ENCODE measurements at regions of chr17 and their contacts with region 1.

Region 1: DNA sequence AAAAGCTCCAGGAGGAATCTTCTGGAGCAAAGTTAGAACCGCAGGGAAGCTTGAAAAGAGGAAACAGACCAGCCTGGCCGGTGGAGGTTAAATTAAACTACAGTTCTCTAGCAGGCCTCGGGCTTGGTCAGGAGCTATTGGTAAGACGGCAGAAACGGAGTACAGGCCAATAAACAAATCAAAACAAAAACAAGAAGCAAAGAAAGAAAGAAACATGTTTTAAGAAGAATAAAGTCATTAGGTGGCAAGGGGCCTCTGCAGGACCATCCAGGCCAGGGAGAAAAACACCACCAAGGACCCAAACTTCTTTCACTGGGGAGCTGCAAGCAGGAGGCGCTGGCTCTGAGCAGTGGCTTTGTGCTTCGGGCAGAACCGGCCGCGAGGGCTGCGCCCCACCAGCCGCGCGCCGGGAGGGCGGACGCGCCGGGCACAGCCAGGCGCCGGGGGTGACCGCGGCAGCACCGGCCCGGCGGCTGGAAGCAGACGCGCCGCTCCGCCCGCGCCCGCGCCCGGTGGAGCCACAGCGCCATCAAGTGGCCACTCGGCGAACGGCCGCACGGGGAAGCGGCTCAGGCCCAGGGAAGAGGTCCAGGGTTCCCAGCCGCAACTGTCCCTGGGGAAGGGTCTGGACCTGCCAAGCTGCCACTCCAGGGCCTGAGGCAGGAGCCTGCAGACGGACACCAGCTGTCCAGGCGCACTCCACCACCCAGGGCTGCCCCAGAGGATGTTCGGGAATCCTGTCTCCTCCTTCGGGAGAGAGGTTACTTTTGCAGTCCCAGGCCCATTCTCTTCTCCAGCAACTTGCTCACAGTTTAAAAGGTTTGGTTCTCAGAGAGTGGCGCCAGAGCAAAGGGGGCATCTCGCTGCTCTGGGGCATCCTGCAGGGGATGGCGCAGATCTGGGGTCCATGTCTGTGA is 419.4 kb downstream of the SOX9 start:
- DNase-seq: peak; percentile 99
- H3K4me3 ChIP-seq: no peak overlapping the region
- H3K27ac ChIP-seq: peak overlapping the region; percentile 31 to 54
- H3K4me1 ChIP-seq: peaks cover 9 to 14% of the 10 kb centered on the region in 2 experiments
- H3K27me3 ChIP-seq: no peaks in the 10 kb centered on the region
- CTCF ChIP-seq: peak; percentile 82
- EP300 ChIP-seq: peak; percentile 14 to 16; a peak in 1 of 4 replicates
- RAD21 ChIP-seq: peak; percentile 93

Region 2: GRCh38 chr17:70775679-70776078 is 1764.6 kb before region 1 on chr17:
- CTCF ChIA-PET with region 1: interaction called, 12 read pairs
- POLR2A ChIA-PET with region 1: no interaction called
- DNase-seq: peak; percentile 28
- H3K4me3 ChIP-seq: no peak overlapping the region
- H3K27ac ChIP-seq: no peak overlapping the region
- H3K4me1 ChIP-seq: peaks cover 0 to 11% of the 10 kb centered on the region in 2 experiments; a peak in 2 of 4 replicates
- H3K27me3 ChIP-seq: no peaks in the 10 kb centered on the region
- CTCF ChIP-seq: no peak
- EP300 ChIP-seq: no peak
- RAD21 ChIP-seq: no peak

Region 3: DNA sequence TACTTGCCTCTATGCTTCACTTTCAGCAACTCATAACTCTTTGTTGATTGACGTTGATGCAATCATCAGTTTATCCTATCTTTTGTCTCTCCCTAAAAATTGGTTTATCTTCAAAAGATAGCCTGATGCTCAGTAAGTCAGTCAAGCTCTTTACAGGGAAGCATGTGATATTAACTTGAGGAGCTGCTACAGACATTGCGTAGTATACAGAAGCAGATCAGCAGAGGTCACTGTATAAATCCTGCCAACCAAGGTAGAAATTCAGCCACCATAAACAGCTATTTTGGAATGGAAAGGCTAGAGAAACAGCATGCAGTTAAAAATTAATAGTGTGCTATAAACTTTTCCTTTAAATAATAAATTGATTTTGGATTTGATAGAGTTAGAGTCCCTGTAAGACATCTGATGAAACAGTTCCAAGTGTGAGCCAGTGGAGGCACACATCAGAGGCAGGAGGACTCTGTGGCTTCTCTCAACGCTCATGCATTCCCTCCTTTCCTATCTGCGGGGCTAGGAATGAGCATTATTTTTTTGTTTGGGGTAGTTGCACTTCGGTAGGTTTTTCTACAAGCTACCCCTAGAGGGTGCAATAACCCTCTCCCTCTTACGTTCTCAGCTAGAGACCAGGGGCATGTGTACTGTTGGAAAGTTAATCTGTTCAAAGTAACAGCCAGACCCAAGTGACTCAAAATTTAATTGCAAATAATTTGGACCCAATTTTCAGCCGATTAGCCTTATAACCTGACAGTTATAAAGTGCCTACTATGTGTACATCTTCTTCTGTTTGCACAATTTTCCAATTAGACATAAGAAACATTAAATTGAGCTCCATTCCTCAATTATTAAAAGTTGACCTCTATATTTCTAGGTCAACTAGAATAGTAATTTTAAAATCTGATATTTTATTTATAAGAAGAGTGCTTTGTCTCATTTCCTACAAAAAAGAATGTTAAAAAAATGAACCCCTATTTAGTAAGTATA is 1067.1 kb before region 1 on chr17:
- CTCF ChIA-PET with region 1: interaction called, 43 read pairs
- POLR2A ChIA-PET with region 1: no interaction called
- DNase-seq: peak; percentile 65
- H3K4me3 ChIP-seq: no peak overlapping the region
- H3K27ac ChIP-seq: no peak overlapping the region
- H3K4me1 ChIP-seq: peaks cover 0 to 4% of the 10 kb centered on the region in 2 experiments; a peak in 1 of 4 replicates
- H3K27me3 ChIP-seq: no peaks in the 10 kb centered on the region
- CTCF ChIP-seq: peak; percentile 94
- EP300 ChIP-seq: 0 out of 4 replicates have a peak, but pooled peaks of 1 of the 2 experiments have one; percentile 9
- RAD21 ChIP-seq: peak; percentile 97

Region 4: DNA sequence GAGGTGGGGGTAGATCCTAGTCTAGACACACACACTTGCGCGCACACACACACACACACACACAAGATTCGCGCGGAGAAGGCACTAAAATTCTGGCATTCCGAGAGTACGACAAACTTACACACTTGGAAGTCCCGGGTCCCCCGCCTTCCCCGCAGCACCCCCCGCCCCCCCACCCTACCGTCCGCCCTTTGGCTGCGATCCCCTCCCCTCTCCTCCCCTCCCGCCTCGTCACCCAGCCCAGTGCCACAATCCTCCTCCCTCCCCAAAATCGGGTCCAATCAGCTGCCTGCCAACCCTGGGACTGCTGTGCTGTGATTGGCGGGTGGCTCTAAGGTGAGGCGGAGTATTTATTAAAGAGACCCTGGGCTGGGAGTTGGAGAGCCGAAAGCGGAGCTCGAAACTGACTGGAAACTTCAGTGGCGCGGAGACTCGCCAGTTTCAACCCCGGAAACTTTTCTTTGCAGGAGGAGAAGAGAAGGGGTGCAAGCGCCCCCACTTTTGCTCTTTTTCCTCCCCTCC is 419.5 kb before region 1 on chr17 and contains the start of gene SOX9:
- CTCF ChIA-PET with region 1: interaction called, 69 read pairs
- POLR2A ChIA-PET with region 1: interaction called, 14 read pairs
- DNase-seq: peak; percentile 95
- H3K4me3 ChIP-seq: peak within 1 kb of the TSS; percentile 82 to 99
- H3K27ac ChIP-seq: peak within 1 kb of the TSS; percentile 60 to 90
- H3K4me1 ChIP-seq: peaks cover 16 to 29% of the 10 kb centered on the region in 2 experiments; a peak in 3 of 4 replicates
- H3K27me3 ChIP-seq: no peaks in the 10 kb centered on the region
- CTCF ChIP-seq: no peak
- EP300 ChIP-seq: peak in 1 of 2 experiments; percentile 26; a peak in 1 of 4 replicates
- RAD21 ChIP-seq: no peak
- polyA plus RNA-seq, gene SOX9: 20.2 and 35.3 TPM in 2 replicates

Region 5: DNA sequence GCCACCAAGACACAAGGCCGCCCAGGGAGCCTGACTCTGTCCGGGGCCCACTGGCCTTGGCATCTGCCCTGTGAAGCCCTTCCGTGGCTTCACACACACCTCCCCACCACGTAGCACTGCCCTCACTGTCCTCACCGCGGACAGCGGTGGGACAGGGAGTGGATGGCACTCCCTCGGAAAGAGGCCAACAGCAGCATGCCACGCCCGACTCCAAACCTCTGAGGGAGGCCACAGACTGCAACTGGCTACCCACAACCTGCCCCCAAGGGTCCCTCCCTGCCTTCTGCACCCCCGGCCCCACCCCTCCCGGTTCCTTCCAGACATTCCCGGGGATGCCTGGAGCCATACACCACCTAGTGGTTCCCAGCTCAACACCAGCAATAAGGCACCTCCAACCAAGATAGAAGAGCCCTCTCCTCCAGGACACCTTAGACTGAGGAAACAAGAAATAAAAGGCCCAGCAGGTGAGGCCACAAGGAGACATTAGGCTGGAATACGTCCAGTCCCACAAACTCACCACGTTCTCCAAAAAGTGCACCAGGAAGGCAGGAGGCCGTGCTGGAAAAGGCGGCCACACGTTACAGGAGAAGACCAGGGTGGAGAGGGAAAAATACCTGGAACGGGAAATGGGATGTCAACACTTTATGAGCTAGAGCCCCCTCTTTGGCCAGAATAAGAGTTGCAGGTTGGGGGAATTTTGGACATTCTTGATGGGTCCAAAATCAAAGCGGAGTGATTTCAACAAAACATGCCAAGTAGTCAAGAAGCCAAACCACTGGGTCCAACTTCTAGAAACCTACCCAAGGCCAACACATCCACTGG is 109.4 kb before region 1 on chr17:
- CTCF ChIA-PET with region 1: interaction called, 18 read pairs
- POLR2A ChIA-PET with region 1: no interaction called
- DNase-seq: no peak
- H3K4me3 ChIP-seq: no peak overlapping the region
- H3K27ac ChIP-seq: no peak overlapping the region
- H3K4me1 ChIP-seq: peaks cover 16 to 31% of the 10 kb centered on the region in 2 experiments; a peak in 2 of 4 replicates
- H3K27me3 ChIP-seq: no peaks in the 10 kb centered on the region
- CTCF ChIP-seq: peak; percentile 49
- EP300 ChIP-seq: no peak
- RAD21 ChIP-seq: peak; percentile 45

Region 6: GRCh38 chr17:72529386-72529785 is 10.9 kb before region 1 on chr17:
- CTCF ChIA-PET with region 1: interaction called, 31 read pairs
- POLR2A ChIA-PET with region 1: no interaction called
- DNase-seq: no peak
- H3K4me3 ChIP-seq: no peak overlapping the region
- H3K27ac ChIP-seq: no peak overlapping the region
- H3K4me1 ChIP-seq: no peaks in the 10 kb centered on the region
- H3K27me3 ChIP-seq: no peaks in the 10 kb centered on the region
- CTCF ChIP-seq: no peak
- EP300 ChIP-seq: no peak
- RAD21 ChIP-seq: no peak

Region 7: DNA sequence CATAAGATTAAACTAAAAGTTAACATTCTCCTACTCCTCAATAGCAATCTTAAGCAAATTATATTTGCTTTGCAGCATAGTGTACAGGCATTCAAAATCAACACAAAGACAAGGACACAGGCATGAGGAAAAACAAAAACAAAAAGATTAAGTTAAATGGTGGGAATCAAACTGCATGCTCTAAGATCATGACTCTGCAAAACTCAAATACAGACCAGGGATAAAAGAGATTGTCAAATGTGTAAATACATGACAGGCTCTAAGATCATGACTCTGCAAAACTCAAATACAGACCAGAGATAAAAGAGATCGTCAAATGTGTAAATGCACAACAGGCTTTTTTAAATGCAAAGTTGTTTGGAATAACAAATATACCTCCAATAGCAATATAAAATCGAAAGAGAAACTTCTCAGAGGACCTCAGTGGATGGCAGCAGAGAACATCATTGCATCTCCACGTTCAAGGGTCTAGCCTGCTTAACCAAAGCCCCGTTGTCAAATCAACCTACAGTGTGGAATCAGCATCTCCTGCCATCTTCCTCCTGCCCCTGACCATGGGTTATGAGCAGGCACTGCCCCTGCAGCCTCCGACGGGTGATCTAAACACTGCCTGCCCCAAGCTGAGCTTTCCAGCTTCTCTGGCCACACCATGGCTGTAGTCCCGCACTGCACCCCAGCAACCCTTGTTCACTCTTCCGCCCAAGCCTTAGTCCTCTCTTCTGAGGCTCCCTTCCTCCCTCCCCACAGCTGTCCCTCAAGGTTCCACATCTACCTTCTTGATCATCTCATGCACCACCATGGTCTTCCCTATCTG is 26.6 kb after region 1 on chr17:
- CTCF ChIA-PET with region 1: no interaction called
- POLR2A ChIA-PET with region 1: no interaction called
- DNase-seq: no peak
- H3K4me3 ChIP-seq: no peak overlapping the region
- H3K27ac ChIP-seq: no peak overlapping the region
- H3K4me1 ChIP-seq: peaks cover 0 to 19% of the 10 kb centered on the region in 2 experiments; a peak in 1 of 4 replicates
- H3K27me3 ChIP-seq: no peaks in the 10 kb centered on the region
- CTCF ChIP-seq: no peak
- EP300 ChIP-seq: no peak
- RAD21 ChIP-seq: no peak

Region 8: DNA sequence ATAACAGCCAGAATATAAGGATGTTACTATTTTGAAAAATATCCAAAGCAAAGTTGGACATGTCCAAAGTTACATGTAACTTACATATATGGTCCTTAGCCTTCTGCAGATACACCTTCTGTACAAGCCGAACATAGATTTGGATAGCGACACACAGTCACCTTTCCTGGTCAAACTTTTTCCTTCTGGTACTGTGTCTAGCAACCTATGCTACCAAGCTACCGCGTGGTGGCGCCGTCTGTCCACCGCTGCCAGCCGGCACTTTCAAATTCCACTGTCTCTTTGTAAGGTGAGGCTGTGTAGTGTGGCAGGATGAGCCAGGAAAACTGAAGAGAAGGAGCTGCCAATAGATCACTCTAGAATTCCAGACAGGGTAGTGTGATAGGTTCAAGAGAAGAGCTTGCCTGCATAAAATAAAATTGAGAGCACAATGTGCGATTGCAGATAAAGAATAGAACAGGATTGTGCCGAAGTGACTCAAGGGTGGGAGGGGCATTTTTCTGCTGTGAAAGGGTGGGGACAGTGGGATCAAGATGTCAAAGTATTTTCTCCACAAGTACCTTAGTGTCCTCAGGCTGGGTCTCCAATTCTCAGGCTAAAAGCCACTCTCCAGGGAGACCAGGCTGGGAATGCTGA is 185.3 kb after region 1 on chr17:
- CTCF ChIA-PET with region 1: no interaction called
- POLR2A ChIA-PET with region 1: no interaction called
- DNase-seq: peak; percentile 78
- H3K4me3 ChIP-seq: no peak overlapping the region
- H3K27ac ChIP-seq: no peak overlapping the region
- H3K4me1 ChIP-seq: no peaks in the 10 kb centered on the region
- H3K27me3 ChIP-seq: no peaks in the 10 kb centered on the region
- CTCF ChIP-seq: peak; percentile 100
- EP300 ChIP-seq: no peak
- RAD21 ChIP-seq: peak; percentile 99

Region 9: DNA sequence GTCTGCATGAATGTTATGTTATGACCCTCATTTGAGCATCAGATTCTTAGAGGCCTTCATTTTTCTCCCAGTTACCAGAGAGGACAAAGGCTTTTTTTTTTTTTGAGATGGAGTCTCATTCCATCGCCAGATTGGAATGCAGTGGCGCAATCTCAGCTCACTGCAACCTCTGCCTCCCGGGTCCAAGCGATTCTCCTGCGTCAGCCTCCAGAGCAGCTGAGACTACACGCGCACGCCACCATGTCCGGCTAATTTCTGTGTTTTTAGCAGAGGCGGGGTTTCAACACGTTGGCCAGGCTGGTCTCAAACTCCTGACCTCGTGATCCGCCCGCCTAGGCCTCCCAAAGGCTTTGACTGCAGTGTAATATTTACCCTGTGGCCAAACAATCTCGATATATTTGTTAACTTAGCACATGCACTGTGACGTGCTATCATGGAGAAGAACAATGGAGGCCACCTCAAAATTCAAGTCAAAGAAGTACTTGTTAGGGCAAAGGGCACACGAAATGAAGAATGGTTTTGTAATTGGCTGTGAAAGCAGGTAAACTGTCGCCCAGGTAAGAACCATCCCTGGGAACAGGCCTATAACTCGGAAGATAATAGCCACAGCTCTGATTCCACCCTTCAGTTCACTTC is 248.8 kb after region 1 on chr17:
- CTCF ChIA-PET with region 1: no interaction called
- POLR2A ChIA-PET with region 1: no interaction called
- DNase-seq: no peak
- H3K4me3 ChIP-seq: no peak overlapping the region
- H3K27ac ChIP-seq: no peak overlapping the region
- H3K4me1 ChIP-seq: peaks cover 0 to 14% of the 10 kb centered on the region in 2 experiments; a peak in 2 of 4 replicates
- H3K27me3 ChIP-seq: no peaks in the 10 kb centered on the region
- CTCF ChIP-seq: no peak
- EP300 ChIP-seq: no peak
- RAD21 ChIP-seq: no peak

Measured in SK-N-SH (cell line).